ENCODE measurements at regions of chr10 and their contacts with region 1.

Region 1: DNA sequence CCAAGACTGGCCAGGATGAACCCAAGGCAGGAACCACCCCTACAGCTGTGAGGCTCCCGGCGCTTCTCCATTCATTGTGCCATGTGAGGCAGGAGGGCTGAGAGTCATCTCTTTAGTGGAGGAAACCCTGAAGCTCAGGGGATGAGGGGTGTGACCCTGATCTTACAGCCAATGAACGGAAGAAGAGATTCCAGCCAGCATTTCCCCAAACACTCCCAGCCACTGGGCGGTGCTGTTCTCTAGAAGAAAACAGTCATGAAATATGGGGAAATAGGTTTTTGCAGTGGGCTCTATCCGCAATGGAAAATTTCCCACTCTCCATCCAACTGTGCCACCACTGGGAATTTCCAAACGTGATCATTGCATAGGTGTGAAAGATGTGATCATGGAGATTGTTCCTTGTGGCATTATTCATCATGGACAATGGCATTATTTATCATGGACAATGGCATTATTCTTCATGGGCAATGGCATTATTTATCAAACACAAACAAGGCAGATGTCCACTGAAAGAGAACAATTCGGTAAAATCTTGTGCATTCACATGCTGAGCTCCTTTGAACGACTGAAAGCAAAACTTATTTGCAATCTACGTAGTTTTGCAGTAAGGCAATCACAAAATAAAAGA is 14.0 kb upstream of the SLC18A2 start:
- DNase-seq: peak; percentile 28
- H3K4me3 Mint-ChIP-seq: no peak overlapping the region
- H3K27ac Mint-ChIP-seq: no peak overlapping the region
- H3K4me1 Mint-ChIP-seq: no peaks in the 10 kb centered on the region
- H3K27me3 Mint-ChIP-seq: peaks cover 47% of the 10 kb centered on the region
- CTCF ChIP-seq: peak; percentile 45

Region 2: DNA sequence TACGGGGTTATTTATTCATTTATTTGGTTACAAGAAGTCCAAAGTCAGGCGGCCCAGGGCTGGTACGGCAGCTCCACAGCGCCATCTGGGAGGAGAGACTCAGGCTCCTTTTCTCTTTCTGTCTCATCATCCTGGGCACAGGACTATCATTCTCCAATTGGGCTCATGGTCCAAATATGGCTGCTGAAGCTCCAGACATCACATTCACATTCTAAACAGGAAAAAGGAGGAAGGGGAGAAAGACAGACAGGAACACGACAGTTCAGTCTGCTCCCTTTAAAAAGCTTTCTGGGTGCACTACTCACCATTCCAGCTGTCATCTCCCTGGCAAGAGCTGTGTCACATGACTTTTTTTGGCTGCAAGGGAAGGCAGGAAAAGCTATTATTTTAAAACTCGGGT is 222.7 kb after region 1 on chr10:
- CTCF ChIA-PET with region 1: interaction called, 3 read pairs
- intact Hi-C with region 1: loop called (anchors 5 kb)
- DNase-seq: peak; percentile 10
- H3K4me3 Mint-ChIP-seq: no peak overlapping the region
- H3K27ac Mint-ChIP-seq: no peak overlapping the region
- H3K4me1 Mint-ChIP-seq: no peaks in the 10 kb centered on the region
- H3K27me3 Mint-ChIP-seq: peaks cover 22% of the 10 kb centered on the region
- CTCF ChIP-seq: no peak

Measured in Calu3 (cell line).